HEK293T (cell line): ENCODE measurements at regions of chr2 and their contacts with region 1.

Region 1: GRCh38 chr2:202238234-202239197 is at the start of gene SUMO1:
- DNase-seq: peak; percentile 91

Region 2: DNA sequence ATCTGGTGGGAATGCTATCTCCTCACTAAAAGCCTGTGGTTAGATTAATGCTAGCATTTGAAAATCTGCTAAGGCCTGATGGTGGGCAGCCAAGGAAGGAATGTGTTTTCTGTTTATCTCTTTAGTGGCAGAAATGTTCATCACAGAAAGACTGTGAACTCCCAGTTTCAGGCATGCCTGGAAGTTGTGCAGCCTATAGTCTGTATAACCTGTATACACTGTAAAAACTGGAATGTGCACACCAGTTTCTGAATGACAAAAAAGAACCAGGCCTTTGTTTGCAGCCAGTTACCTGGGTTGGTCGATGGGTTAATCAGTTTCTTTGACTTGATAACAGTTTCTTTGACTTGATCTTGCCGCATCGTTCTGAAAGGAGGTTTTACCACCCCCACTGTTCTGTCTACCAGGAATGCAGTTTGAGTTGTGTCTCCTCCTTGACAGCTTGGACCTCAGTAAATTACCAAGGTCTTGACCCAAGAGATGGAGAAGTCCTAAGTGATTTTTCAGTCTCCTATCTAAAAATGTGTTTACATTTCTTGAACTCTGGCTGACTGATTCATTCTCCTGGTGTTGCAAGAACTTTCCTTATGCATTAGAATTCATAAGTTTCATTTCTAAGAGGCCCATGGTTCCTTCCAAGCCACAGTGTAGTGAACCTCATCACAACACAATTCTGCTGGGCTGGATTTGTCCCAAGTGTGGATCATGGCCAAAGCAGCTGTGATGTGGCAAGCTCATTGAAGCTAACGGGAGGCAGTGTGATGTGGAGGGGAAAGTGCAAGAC is 103.2 kb before region 1 on chr2:
- CTCF ChIA-PET with region 1: no interaction called
- POLR2A ChIA-PET with region 1: no interaction called
- DNase-seq: no peak

Region 3: GRCh38 chr2:202269585-202269984 is 31.1 kb after region 1 on chr2:
- CTCF ChIA-PET with region 1: no interaction called
- POLR2A ChIA-PET with region 1: interaction called, 28 read pairs
- DNase-seq: no peak

Region 4: GRCh38 chr2:202307690-202308089 is 69.2 kb after region 1 on chr2:
- CTCF ChIA-PET with region 1: no interaction called
- POLR2A ChIA-PET with region 1: no interaction called
- DNase-seq: no peak